Naive thymus-derived CD4-positive, alpha-beta T cell (primary cell): ENCODE measurements at regions of chr19 and their contacts with region 1.

Region 1: GRCh38 chr19:35949131-35949530 is 13.0 kb downstream of the LRFN3 start:
- DNase-seq: no peak
- ATAC-seq: no peak
- H3K4me3 ChIP-seq: no peak overlapping the region
- H3K4me3 Mint-ChIP-seq: peak overlapping the region in 4 of 10 donors; percentile 15 to 76 (median 32)
- H3K27ac ChIP-seq: no peak overlapping the region
- H3K27ac Mint-ChIP-seq: peak overlapping the region; percentile 33 to 96 (median 79)
- H3K4me1 ChIP-seq: peaks cover 21 to 41% of the 10 kb centered on the region in 2 donors
- H3K4me1 Mint-ChIP-seq: peaks cover 38 to 75% (median 60%) of the 10 kb centered on the region in 7 donors
- H3K27me3 ChIP-seq: no peaks in the 10 kb centered on the region
- H3K27me3 Mint-ChIP-seq: no peaks in the 10 kb centered on the region

Region 2: GRCh38 chr19:35995048-35995993 is 46.2 kb after region 1 on chr19 and contains the start of gene SDHAF1:
- CTCF ChIA-PET with region 1: no interaction called
- POLR2A ChIA-PET with region 1: interaction called, 11 read pairs
- intact Hi-C with region 1: loop called in 1 of 2 experiments (anchors 5 kb)
- DNase-seq: peak; percentile 77 to 94 (median 87)
- ATAC-seq: peak; percentile 96
- H3K4me3 ChIP-seq: peak within 1 kb of the TSS; percentile 84
- H3K4me3 Mint-ChIP-seq: peak within 1 kb of the TSS; percentile 89 to 99 (median 96)
- H3K27ac ChIP-seq: peak within 1 kb of the TSS; percentile 74
- H3K27ac Mint-ChIP-seq: peak within 1 kb of the TSS; percentile 90 to 97 (median 95)
- H3K4me1 ChIP-seq: peaks cover 11 to 16% of the 10 kb centered on the region in 2 donors
- H3K4me1 Mint-ChIP-seq: peaks cover 22 to 44% (median 33%) of the 10 kb centered on the region in 7 donors
- H3K27me3 ChIP-seq: no peaks in the 10 kb centered on the region
- H3K27me3 Mint-ChIP-seq: no peaks in the 10 kb centered on the region
- total RNA-seq, gene SDHAF1: 7.8 to 26.1 (median 17.8) TPM